MCF 10A (cell line): ENCODE measurements at regions of chr4 and their contacts with region 1.

Region 1: DNA sequence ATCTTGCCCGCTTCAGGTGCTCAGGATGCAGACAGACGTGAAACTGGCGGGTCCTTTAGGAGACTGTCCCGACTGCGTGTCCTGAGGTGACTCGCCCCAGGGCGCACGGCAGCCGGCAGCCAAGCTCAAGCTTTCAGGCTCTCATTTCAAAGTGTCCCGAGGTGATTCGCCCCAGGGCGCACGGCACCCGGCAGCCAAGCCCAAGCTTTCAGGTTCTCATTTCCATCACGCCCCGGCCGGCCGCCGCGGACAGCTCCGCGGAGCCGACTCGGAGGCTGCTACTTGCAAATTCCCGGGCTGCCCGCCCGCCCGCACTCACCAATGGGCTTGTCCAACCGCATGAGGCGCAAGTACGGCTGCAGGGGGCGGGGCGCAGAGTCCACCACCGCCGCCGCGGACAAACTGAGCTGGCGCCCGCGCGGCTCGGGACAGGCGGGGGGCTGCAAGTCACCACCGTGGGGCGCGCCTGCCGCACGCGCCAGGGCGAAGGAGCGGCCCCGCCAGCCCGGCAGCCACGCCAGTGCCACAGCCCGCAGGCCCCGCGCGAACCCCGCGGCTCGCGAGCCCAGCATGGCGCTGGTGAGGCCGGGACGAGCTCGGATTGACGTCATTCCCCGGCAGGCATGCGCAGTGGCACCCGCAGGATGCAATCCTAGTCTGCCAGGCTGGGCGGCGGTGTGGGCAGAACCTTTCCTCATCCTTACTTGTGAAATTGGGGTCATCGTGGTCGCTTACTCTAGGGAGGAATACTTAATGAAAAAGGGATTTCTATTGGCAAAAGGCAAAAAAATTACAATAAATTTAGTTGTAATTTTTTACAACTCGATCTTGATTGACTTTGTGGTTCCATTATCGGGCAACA is at the start of gene COQ2:
- DNase-seq: peak; percentile 94
- H3K4me3 Mint-ChIP-seq: peak within 1 kb of the TSS; percentile 86
- H3K27ac Mint-ChIP-seq: peak within 1 kb of the TSS; percentile 97
- H3K4me1 Mint-ChIP-seq: peaks cover 24% of the 10 kb centered on the region
- H3K27me3 Mint-ChIP-seq: no peaks in the 10 kb centered on the region
- CTCF ChIP-seq: no peak
- total RNA-seq, gene COQ2: 18.0 and 27.8 TPM in 2 replicates

Region 2: GRCh38 chr4:82331814-82332213 is 952.6 kb before region 1 on chr4:
- CTCF ChIA-PET with region 1: no interaction called
- POLR2A ChIA-PET with region 1: no interaction called
- intact Hi-C with region 1: no loop called
- DNase-seq: no peak
- H3K4me3 Mint-ChIP-seq: no peak overlapping the region
- H3K27ac Mint-ChIP-seq: no peak overlapping the region
- H3K4me1 Mint-ChIP-seq: no peaks in the 10 kb centered on the region
- H3K27me3 Mint-ChIP-seq: no peaks in the 10 kb centered on the region
- CTCF ChIP-seq: no peak

Region 3: DNA sequence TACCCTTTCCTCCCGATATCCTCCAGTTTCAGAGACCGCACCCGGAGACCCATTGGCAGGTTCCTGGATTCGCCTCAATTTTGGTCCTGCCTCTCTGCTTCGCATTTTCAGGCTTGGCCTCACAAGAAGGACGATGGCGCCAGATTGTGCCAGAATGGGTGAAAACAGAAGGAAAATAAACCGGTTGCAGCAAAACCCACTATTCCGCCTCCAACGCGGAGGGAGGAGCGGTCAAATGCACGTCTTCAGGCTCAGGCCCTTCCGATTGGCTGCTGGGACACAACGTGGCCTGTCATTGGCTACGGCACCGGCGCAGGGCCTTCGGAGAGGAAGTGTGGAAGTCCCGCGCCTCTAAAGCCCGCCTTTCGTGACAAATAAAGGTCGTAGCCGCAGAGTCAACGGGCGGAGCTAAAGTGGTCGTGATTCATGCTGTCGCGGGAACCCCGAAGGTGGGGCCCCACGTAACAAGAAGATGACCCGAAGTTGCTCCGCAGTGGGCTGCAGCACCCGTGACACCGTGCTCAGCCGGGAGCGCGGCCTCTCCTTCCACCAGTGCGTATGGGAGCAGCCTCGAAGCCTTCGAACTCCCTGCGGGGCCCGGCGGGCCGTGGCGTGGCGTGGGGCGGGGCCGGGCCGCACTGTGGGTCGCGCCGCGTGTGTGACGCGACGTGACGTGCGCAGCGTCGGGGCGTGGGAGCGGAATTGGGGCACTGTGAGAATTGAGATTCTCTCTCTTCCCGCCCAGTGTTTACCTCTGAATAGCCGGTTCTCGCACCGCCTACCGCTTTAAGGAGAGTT is 383.9 kb before region 1 on chr4 and contains the start of gene THAP9:
- CTCF ChIA-PET with region 1: interaction called, 6 read pairs
- POLR2A ChIA-PET with region 1: interaction called, 16 read pairs
- intact Hi-C with region 1: loop called (anchors 5 kb)
- DNase-seq: peak; percentile 99
- H3K4me3 Mint-ChIP-seq: no peak within 1 kb of the TSS
- H3K27ac Mint-ChIP-seq: no peak within 1 kb of the TSS
- H3K4me1 Mint-ChIP-seq: peaks cover 10% of the 10 kb centered on the region
- H3K27me3 Mint-ChIP-seq: no peaks in the 10 kb centered on the region
- CTCF ChIP-seq: no peak
- total RNA-seq, gene THAP9: 3.6 and 4.0 TPM in 2 replicates

Region 4: DNA sequence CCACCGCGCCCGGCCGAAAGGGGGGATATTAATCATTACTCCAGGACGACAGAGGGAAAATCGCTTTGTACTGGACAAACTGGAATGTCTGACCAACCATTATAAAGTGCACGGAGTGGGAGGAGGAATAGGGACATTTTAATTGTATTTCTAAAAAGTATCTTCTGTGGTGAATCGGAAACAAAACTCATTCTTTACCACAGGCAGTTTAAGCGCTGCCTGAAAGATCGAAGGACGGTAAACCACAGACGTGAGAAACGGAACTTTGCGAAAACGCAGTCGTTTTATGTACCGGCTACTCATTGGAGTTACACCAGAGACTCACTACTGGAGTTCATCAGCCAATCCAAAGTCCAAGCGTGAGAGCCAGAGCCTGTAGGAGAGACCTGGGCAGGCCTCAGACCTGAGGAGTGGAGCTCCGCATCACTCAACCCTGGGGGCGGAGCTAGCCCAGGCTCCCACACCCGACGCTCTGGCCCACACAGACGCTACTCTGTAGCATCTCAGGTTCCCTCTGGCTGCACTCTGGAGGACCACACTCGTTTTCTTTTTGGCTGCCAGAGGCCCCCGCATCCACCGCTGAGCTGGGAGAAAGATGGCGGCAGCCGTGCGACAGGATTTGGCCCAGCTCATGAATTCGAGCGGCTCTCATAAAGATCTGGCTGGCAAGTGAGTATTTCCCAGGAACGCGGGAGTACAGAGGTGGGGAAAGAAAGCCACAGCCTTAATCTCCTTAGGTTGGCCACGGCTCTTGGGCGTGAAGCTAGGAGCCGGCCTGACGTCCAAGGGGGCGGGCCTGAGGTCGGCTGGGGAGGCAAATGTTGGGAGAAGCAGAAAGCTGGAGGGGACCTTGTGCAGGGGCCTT is 249.6 kb before region 1 on chr4 and contains the start of gene COPS4:
- CTCF ChIA-PET with region 1: interaction called, 6 read pairs
- POLR2A ChIA-PET with region 1: interaction called, 24 read pairs
- intact Hi-C with region 1: no loop called
- DNase-seq: peak; percentile 100
- H3K4me3 Mint-ChIP-seq: peak within 1 kb of the TSS; percentile 96
- H3K27ac Mint-ChIP-seq: peak within 1 kb of the TSS; percentile 92
- H3K4me1 Mint-ChIP-seq: peaks cover 8% of the 10 kb centered on the region
- H3K27me3 Mint-ChIP-seq: no peaks in the 10 kb centered on the region
- CTCF ChIP-seq: no peak
- total RNA-seq, gene COPS4: 34.7 and 36.6 TPM in 2 replicates

Region 5: GRCh38 chr4:83074086-83074704 is 210.2 kb before region 1 on chr4:
- CTCF ChIA-PET with region 1: interaction called, 85 read pairs
- POLR2A ChIA-PET with region 1: interaction called, 7 read pairs
- intact Hi-C with region 1: loop called (anchors 1 kb)
- DNase-seq: peak; percentile 78
- H3K4me3 Mint-ChIP-seq: no peak overlapping the region
- H3K27ac Mint-ChIP-seq: no peak overlapping the region
- H3K4me1 Mint-ChIP-seq: peaks cover 27% of the 10 kb centered on the region
- H3K27me3 Mint-ChIP-seq: no peaks in the 10 kb centered on the region
- CTCF ChIP-seq: peak; percentile 49

Region 6: DNA sequence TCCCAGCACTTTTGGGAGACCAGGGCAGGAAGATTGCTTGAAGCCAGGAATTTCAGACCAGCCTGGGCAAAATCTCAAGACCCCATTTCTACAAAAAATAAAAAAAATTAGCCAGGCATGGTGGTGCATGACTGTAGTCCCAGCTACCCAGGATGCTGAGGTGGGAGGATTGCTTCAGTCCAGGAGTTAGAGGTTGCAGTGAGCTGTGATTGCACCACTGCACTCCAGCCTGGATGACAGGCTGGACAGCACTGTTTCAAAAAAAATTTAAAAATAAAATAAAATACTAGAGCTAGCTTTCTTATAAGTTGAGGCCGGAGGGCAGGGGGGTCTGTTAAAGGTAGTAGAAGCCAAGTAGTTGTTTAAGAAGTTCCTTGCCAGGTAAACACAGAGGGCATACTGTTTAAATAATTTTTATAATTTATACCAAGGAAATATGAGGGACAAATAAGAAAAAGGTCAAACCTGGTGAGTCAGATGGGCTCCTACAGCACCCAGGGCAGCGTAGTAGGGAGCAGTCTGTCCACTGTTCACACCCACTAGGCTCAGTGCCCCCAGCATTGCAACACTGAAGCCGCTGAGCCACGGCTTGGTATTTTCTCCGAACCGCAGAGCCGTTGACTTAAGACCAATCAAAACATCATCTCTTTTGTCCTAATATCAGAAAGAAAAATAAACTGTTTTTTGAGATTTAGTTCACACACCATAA is 17.1 kb before region 1 on chr4:
- CTCF ChIA-PET with region 1: interaction called, 31 read pairs
- POLR2A ChIA-PET with region 1: interaction called, 13 read pairs
- intact Hi-C with region 1: no loop called
- DNase-seq: peak; percentile 96
- H3K4me3 Mint-ChIP-seq: no peak overlapping the region
- H3K27ac Mint-ChIP-seq: peak overlapping the region; percentile 49
- H3K4me1 Mint-ChIP-seq: peaks cover 11% of the 10 kb centered on the region
- H3K27me3 Mint-ChIP-seq: no peaks in the 10 kb centered on the region
- CTCF ChIP-seq: no peak

Region 7: GRCh38 chr4:83455281-83456129 is 171.1 kb after region 1 on chr4 and contains the starts of genes HELQ and MRPS18C:
- CTCF ChIA-PET with region 1: interaction called, 4 read pairs
- POLR2A ChIA-PET with region 1: interaction called, 20 read pairs
- intact Hi-C with region 1: loop called (anchors 1 kb)
- DNase-seq: peak; percentile 99
- H3K4me3 Mint-ChIP-seq: peak within 1 kb of the TSS; percentile 98
- H3K27ac Mint-ChIP-seq: peak within 1 kb of the TSS; percentile 100
- H3K4me1 Mint-ChIP-seq: peaks cover 17% of the 10 kb centered on the region
- H3K27me3 Mint-ChIP-seq: no peaks in the 10 kb centered on the region
- CTCF ChIP-seq: peak; percentile 38
- total RNA-seq, gene HELQ: 12.8 and 14.4 TPM in 2 replicates
- total RNA-seq, gene MRPS18C: 93.0 and 106 TPM in 2 replicates